PC-9 (cell line): ENCODE measurements at regions of chrX and their contacts with region 1.

Region 1: GRCh38 chrX:1281521-1281920 is 12.9 kb downstream of the CSF2RA start:
- DNase-seq: peak; percentile 5 to 78
- H3K4me3 ChIP-seq: no peak overlapping the region
- H3K27ac ChIP-seq: peak overlapping the region; percentile 13
- H3K4me1 ChIP-seq: peaks cover 14% of the 10 kb centered on the region
- H3K27me3 ChIP-seq: no peaks in the 10 kb centered on the region
- CTCF ChIP-seq: no peak

Region 2: DNA sequence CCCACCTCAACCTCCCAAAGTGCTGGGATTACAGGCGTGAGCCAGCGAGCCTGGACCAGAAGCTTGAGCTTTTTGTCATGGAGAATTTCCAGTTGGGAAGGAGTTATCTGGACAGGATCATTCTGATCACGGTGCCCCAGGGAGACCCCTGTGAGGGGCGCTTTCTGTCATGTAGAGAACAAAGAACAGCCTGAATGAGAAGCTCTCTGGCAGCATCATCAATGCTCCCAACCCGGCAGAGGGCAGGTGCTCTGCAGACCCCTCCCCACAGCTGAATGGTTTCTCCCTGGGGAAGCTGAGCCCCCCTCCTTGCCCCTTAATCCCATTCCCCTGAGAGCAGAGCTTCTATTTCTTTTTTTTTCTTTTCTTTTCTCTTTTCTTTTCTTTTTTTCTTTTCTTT is 20.2 kb before region 1 on chrX:
- CTCF ChIA-PET with region 1: no interaction called
- POLR2A ChIA-PET with region 1: no interaction called
- intact Hi-C with region 1: loop called (anchors 2 kb)
- DNase-seq: no peak
- H3K4me3 ChIP-seq: no peak overlapping the region
- H3K27ac ChIP-seq: no peak overlapping the region
- H3K4me1 ChIP-seq: peaks cover 17% of the 10 kb centered on the region
- H3K27me3 ChIP-seq: no peaks in the 10 kb centered on the region
- CTCF ChIP-seq: no peak